ENCODE measurements at regions of chr6 and their contacts with region 1.

Region 1: GRCh38 chr6:27864906-27865849 is 47.0 kb downstream of the OR2B2 start:
- DNase-seq: peak; percentile 56 to 93 (median 89)
- ATAC-seq: peak; percentile 85
- H3K4me3 ChIP-seq: peak overlapping the region; percentile 74
- H3K4me3 Mint-ChIP-seq: peak overlapping the region; percentile 85 to 99 (median 97)
- H3K27ac ChIP-seq: peak overlapping the region; percentile 71
- H3K27ac Mint-ChIP-seq: peak overlapping the region; percentile 88 to 98 (median 95)
- H3K4me1 ChIP-seq: peaks cover 8 to 25% of the 10 kb centered on the region in 2 donors
- H3K4me1 Mint-ChIP-seq: peaks cover 22 to 64% (median 46%) of the 10 kb centered on the region in 7 donors
- H3K27me3 ChIP-seq: no peaks in the 10 kb centered on the region
- H3K27me3 Mint-ChIP-seq: peaks cover 0 to 16% (median 0%) of the 10 kb centered on the region in 5 donors

Region 2: DNA sequence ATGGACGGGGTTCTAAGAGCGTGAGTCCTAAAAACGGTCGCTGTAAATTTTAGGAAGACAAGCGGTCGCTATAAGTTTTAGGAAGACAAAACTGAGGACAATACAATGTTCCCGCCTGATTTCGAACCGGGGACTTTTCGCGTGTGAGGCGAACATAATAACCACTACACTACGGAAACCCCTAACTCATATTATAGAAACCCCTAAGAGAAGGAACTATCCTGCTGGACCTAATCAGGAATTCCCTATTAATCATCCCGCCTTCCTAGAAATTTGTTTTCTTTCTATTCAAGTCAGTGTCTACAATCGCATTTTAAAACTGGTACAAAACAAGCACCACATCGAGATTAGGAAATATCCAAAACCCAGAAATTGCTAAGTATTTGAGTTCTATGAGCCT is 136.7 kb before region 1 on chr6:
- CTCF ChIA-PET with region 1: no interaction called
- POLR2A ChIA-PET with region 1: no interaction called
- intact Hi-C with region 1: no loop called
- DNase-seq: no peak
- ATAC-seq: no peak
- H3K4me3 ChIP-seq: no peak overlapping the region
- H3K4me3 Mint-ChIP-seq: no peak overlapping the region
- H3K27ac ChIP-seq: no peak overlapping the region
- H3K27ac Mint-ChIP-seq: no peak overlapping the region
- H3K4me1 ChIP-seq: no peaks in the 10 kb centered on the region
- H3K4me1 Mint-ChIP-seq: no peaks in the 10 kb centered on the region
- H3K27me3 ChIP-seq: no peaks in the 10 kb centered on the region
- H3K27me3 Mint-ChIP-seq: peaks cover 25 to 59% (median 52%) of the 10 kb centered on the region in 5 donors

Region 3: DNA sequence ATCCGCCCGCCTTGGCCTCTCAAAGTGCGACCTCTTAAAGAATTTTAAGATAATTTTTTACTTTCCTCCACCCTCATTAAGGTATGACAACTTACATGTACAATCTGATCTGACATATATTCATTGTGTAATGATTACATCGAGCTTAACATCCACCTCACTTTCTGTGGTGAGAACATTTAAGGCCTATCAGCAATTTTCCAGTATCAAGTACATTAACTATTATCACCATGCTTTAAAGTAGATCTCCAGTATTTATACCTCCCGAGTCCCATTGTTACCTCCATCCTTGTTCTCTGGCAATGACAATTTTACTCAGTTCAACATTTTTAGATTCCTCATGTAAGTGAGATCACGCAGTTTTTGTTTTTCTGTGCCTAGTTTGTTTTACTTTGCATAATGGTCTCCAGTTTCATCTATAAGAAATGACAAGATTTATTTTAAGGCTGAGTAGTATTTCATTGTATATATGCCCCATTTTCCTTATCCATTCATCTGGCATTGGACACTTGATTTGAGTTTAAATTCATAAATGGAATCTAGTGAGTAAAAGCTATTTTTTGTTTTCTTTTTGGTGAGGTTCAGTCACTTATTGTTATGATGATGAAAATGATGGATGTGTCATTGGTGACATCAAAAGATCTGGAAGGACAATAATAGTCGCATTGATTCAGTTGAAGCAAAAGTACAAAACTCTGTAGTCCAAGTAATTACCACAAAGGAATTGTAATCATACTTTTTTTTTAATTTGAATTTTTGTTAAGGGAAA is 40.0 kb before region 1 on chr6:
- CTCF ChIA-PET with region 1: no interaction called
- POLR2A ChIA-PET with region 1: interaction called, 1,351 read pairs
- intact Hi-C with region 1: no loop called
- DNase-seq: no peak
- ATAC-seq: no peak
- H3K4me3 ChIP-seq: peak overlapping the region; percentile 87
- H3K4me3 Mint-ChIP-seq: peak overlapping the region; percentile 82 to 99 (median 94)
- H3K27ac ChIP-seq: peak overlapping the region; percentile 89
- H3K27ac Mint-ChIP-seq: peak overlapping the region; percentile 90 to 100 (median 98)
- H3K4me1 ChIP-seq: peaks cover 6% of the 10 kb centered on the region in 2 donors
- H3K4me1 Mint-ChIP-seq: peaks cover 11 to 50% (median 33%) of the 10 kb centered on the region in 7 donors
- H3K27me3 ChIP-seq: no peaks in the 10 kb centered on the region
- H3K27me3 Mint-ChIP-seq: peaks cover 0 to 4% (median 0%) of the 10 kb centered on the region in 5 donors

Region 4: DNA sequence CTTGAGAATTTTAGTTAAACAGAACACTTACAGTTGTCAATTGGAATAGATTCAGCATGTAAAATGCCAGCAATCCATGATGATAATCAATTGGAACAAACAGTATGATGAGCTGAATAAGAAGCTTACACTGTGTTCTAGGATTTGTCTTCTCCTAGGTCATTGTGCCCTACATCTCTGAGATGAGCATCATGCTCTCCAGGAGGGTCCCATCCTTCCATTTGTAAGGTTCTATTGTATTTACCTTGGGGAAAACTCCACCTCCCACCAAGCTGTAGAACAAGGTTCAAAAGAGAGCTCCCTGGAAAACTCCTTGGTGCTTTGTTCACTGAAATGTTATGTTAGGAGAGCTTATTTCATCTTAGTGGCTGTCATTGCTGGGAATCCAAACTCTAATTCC is 13.7 kb before region 1 on chr6:
- CTCF ChIA-PET with region 1: interaction called, 3 read pairs
- POLR2A ChIA-PET with region 1: interaction called, 37 read pairs
- intact Hi-C with region 1: no loop called
- DNase-seq: no peak
- ATAC-seq: no peak
- H3K4me3 ChIP-seq: no peak overlapping the region
- H3K4me3 Mint-ChIP-seq: no peak overlapping the region
- H3K27ac ChIP-seq: no peak overlapping the region
- H3K27ac Mint-ChIP-seq: no peak overlapping the region
- H3K4me1 ChIP-seq: no peaks in the 10 kb centered on the region
- H3K4me1 Mint-ChIP-seq: peaks cover 0 to 5% (median 0%) of the 10 kb centered on the region in 7 donors
- H3K27me3 ChIP-seq: no peaks in the 10 kb centered on the region
- H3K27me3 Mint-ChIP-seq: peaks cover 0 to 29% (median 4%) of the 10 kb centered on the region in 5 donors

Region 5: GRCh38 chr6:28005124-28005890 is 140.1 kb after region 1 on chr6:
- CTCF ChIA-PET with region 1: no interaction called
- POLR2A ChIA-PET with region 1: no interaction called
- intact Hi-C with region 1: no loop called
- DNase-seq: no peak
- ATAC-seq: no peak
- H3K4me3 ChIP-seq: no peak overlapping the region
- H3K4me3 Mint-ChIP-seq: no peak overlapping the region
- H3K27ac ChIP-seq: no peak overlapping the region
- H3K27ac Mint-ChIP-seq: no peak overlapping the region
- H3K4me1 ChIP-seq: no peaks in the 10 kb centered on the region
- H3K4me1 Mint-ChIP-seq: peaks cover 0 to 2% (median 0%) of the 10 kb centered on the region in 7 donors
- H3K27me3 ChIP-seq: no peaks in the 10 kb centered on the region
- H3K27me3 Mint-ChIP-seq: peaks cover 6 to 48% (median 25%) of the 10 kb centered on the region in 5 donors